ENCODE measurements at regions of chr7 and their contacts with region 1.

Region 1: DNA sequence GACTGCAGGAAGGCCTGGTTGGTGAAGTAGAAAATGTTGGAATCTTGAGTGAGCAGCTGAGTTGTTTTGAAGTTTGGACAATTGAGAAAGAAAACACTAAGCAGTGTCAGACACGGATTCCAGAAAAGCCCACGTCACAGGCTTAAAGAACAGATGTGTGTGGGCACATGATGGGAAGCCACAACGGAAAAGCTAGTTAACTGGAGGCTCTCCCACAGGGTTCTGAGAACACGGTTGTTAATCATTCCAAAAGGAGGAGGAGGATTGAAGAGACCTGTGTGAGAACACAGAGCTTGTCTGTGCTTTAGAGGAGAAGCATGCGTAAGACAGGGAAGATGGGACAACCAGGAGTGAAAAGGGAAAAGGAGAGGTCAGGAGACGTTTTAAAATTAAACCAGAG is 42.6 kb downstream of the SHH start:
- DNase-seq: no peak
- ATAC-seq: no peak
- H3K4me3 Mint-ChIP-seq: no peak overlapping the region
- H3K27ac Mint-ChIP-seq: peak overlapping the region; percentile 57
- H3K4me1 Mint-ChIP-seq: peaks cover 18% of the 10 kb centered on the region
- H3K27me3 Mint-ChIP-seq: no peaks in the 10 kb centered on the region
- CTCF ChIP-seq: no peak

Region 2: DNA sequence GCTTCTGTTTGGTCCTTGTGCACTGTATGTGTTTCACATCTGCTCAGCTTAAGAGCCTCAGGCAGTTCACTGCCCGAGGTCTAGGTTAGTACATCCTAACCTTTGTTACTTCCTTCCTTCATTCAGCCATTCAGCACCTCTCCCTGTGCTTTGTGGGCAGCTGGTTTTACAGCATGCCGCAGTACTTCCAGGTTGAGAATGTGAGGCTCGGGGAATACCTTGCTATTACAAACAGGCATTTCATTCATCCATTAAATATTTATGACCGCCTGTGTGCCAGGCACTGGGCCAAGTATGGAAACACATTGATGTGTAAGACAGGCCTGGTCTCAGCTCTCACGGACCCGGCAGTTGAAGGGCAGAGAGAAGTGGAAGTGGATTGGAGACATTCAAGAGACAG is 39.9 kb before region 1 on chr7:
- CTCF ChIA-PET with region 1: interaction called, 34 read pairs
- POLR2A ChIA-PET with region 1: interaction called, 4 read pairs
- intact Hi-C with region 1: no loop called
- DNase-seq: no peak
- ATAC-seq: no peak
- H3K4me3 Mint-ChIP-seq: no peak overlapping the region
- H3K27ac Mint-ChIP-seq: peak overlapping the region; percentile 32
- H3K4me1 Mint-ChIP-seq: peaks cover 60% of the 10 kb centered on the region
- H3K27me3 Mint-ChIP-seq: no peaks in the 10 kb centered on the region
- CTCF ChIP-seq: no peak

Region 3: GRCh38 chr7:155746188-155746587 is 23.5 kb before region 1 on chr7:
- CTCF ChIA-PET with region 1: interaction called, 19 read pairs
- POLR2A ChIA-PET with region 1: no interaction called
- intact Hi-C with region 1: no loop called
- DNase-seq: no peak
- ATAC-seq: peak; percentile 52
- H3K4me3 Mint-ChIP-seq: no peak overlapping the region
- H3K27ac Mint-ChIP-seq: peak overlapping the region; percentile 48
- H3K4me1 Mint-ChIP-seq: peaks cover 66% of the 10 kb centered on the region
- H3K27me3 Mint-ChIP-seq: no peaks in the 10 kb centered on the region
- CTCF ChIP-seq: no peak

Region 4: DNA sequence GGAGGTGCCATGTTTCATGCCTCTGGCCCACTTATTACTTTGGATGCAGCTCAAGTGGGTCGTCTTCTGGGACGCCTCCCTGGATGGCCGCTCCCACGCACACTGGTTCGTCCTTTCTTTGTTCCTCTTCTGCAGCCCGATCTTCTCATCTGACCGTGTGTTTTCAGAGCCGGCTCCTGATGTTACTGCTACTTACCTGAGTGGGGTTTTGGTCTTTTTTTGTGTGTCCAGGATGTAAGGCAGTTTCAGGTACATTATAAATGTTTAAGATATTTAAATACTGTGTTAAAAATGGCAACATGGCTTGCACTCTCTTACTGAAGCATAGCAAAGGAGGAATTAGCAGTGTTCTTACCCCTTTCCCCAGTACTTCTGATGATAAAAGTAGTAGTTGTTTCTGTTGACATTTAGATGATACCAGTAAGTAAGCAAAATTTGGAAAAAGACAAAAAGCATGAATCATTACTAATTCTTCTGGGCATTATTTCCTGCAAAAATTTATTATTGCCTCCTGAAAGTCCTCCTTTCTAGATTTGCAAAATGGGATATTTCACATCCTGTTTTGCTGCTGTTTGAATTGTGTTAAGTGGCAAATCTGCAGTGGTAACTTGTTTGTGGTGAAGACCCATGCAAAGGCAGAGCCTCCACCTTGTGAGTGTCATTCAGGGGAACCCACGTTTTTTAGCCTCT is 16.8 kb before region 1 on chr7:
- CTCF ChIA-PET with region 1: interaction called, 19 read pairs
- POLR2A ChIA-PET with region 1: interaction called, 17 read pairs
- intact Hi-C with region 1: no loop called
- DNase-seq: no peak
- ATAC-seq: peak; percentile 15
- H3K4me3 Mint-ChIP-seq: no peak overlapping the region
- H3K27ac Mint-ChIP-seq: peak overlapping the region; percentile 74
- H3K4me1 Mint-ChIP-seq: peaks cover 82% of the 10 kb centered on the region
- H3K27me3 Mint-ChIP-seq: no peaks in the 10 kb centered on the region
- CTCF ChIP-seq: no peak